ENCODE measurements at regions of chr14 and their contacts with region 1.

Region 1: GRCh38 chr14:69535230-69535848 is 39.3 kb downstream of the CCDC177 start:
- DNase-seq: no peak
- ATAC-seq: peak; percentile 87
- H3K4me3 ChIP-seq: no peak overlapping the region
- H3K27ac ChIP-seq: no peak overlapping the region
- H3K4me1 ChIP-seq: no peaks in the 10 kb centered on the region
- H3K27me3 ChIP-seq: no peaks in the 10 kb centered on the region
- CTCF ChIP-seq: peak; percentile 83

Region 2: DNA sequence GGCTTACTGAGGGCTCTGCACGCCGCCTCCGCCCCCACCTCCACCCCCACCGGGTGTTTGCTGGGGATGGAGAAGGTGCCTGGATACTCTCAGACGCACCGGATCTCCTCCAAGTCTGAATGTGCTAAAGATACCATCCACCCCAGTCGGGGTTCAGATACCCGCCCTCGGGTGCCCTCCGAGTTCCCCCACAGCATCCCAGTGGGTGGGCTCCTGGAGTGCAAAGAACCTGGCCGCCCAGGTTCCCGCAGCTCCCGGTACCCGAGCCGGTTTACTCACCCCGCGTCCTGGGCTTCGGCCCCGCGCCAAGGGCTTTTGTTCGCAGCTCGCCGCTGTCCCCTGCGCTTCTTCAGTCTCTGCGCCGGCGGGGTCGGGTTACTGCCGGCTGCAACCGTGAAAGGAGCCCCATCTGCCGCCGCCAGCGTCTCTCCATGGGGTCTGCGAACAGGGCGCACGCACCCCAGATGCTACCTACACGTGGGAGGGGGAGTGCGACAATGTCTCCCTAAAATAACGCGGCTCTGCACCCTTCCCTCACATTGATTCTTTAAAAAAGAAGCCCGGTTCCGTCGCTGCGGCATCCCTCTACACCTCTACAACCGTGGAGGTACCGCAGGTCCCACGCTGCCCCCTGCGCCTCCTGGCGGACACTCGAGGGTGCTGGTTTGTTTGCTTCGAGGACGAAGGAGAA is 39.1 kb after region 1 on chr14 and contains the start of gene CCDC177:
- CTCF ChIA-PET with region 1: interaction called, 6 read pairs
- POLR2A ChIA-PET with region 1: no interaction called
- in situ Hi-C with region 1: no loop called
- intact Hi-C with region 1: loop called (anchors 5 kb)
- DNase-seq: peak; percentile 15
- ATAC-seq: peak; percentile 79
- H3K4me3 ChIP-seq: peak within 1 kb of the TSS; percentile 24 to 34
- H3K27ac ChIP-seq: no peak within 1 kb of the TSS
- H3K4me1 ChIP-seq: no peaks in the 10 kb centered on the region
- H3K27me3 ChIP-seq: peaks cover 2% of the 10 kb centered on the region; the same call in 1 of the 2 replicates
- CTCF ChIP-seq: peak; percentile 88
- total RNA-seq, gene CCDC177: not detected

Region 3: DNA sequence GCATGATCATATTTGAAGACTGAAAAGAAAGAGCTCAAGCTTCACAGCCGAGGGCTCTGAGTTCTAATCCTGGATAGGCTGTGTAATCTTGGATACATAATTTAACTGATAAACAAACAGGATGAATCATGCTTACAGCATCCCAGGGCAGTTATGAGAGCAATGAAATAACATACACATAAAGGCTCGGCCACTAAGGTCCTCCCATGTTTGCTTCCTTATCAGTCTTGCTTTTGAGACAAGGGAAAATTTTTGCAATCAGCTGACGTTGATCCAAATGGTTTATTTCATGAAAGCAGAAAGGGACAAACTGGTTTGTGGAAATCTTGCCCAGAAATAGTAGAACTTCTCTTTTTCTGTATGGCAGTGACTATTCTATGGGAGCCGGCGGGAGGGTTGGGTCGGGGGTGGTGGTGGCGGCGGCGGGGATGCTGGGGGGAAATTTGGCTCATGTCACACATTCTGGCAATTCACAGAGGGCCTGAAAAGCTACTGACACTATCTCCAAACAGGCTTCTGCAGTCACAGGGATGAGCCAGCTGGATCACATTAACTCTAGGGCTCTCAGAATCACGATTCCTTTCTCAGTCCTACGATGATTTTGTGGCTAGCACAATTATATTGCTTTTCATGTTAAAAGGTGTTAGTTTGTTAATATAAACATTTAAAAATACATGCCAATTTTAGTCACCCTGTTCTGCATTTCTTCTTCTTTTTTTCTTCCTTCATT is 529.0 kb after region 1 on chr14:
- CTCF ChIA-PET with region 1: no interaction called
- POLR2A ChIA-PET with region 1: no interaction called
- in situ Hi-C with region 1: no loop called
- intact Hi-C with region 1: no loop called
- DNase-seq: no peak
- ATAC-seq: no peak
- H3K4me3 ChIP-seq: no peak overlapping the region
- H3K27ac ChIP-seq: no peak overlapping the region
- H3K4me1 ChIP-seq: no peaks in the 10 kb centered on the region
- H3K27me3 ChIP-seq: no peaks in the 10 kb centered on the region
- CTCF ChIP-seq: no peak

Measured in Panc1 (cell line).